ENCODE measurements at regions of chr5 and their contacts with region 1.

Region 1: DNA sequence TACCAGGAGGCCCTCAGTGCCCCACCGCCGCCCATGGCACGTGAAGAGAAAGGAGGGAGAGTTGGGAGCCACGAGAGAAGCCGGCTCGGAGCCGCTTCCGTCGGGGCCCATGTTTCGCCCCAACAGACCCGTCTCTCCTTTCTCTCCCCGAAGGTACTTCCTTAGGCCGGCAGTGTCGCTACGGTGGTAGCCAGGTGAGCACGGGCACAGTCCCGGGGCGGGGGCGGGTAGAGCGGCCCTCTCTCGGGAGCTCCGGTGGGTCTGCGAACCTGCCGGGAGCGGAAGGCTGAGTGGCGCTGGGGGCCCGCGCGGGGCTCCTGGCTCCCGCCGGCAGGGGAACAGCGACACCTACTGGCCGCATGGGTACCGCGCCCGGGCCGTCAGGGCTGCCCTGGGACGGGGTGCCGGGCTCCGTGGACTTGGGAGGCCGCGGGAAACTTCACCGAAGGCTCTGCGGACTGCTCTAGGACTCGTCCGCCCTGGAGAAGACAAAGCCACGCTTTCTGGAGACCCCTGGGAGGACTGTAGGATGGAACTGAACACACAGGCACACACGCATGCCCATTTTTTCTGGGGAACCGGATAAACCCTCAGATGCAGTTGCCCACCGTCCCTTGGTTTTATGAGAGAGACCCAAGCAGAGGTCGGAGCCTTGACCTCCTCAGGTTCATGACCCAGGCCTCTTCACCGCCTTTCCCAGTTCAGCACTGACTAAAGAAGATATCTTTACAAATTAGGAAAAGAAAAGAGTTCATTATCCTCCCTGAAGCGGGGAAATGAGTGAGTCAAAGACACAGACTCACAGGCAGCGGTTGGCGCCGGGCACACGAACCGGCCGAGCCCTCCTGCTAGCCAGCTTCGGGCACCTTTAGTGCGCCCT is 202.5 kb downstream of the MEF2C start:
- DNase-seq: peak; percentile 51
- H3K4me3 Mint-ChIP-seq: peak overlapping the region; percentile 45
- H3K27ac Mint-ChIP-seq: no peak overlapping the region
- H3K4me1 Mint-ChIP-seq: no peaks in the 10 kb centered on the region
- H3K27me3 Mint-ChIP-seq: peaks cover 77% of the 10 kb centered on the region
- CTCF ChIP-seq: peak; percentile 95

Region 2: GRCh38 chr5:88140856-88141752 is 539.4 kb before region 1 on chr5:
- CTCF ChIA-PET with region 1: interaction called, 3 read pairs
- POLR2A ChIA-PET with region 1: no interaction called
- intact Hi-C with region 1: loop called (anchors 5 kb)
- DNase-seq: peak; percentile 86
- H3K4me3 Mint-ChIP-seq: no peak overlapping the region
- H3K27ac Mint-ChIP-seq: no peak overlapping the region
- H3K4me1 Mint-ChIP-seq: no peaks in the 10 kb centered on the region
- H3K27me3 Mint-ChIP-seq: peaks cover 15% of the 10 kb centered on the region
- CTCF ChIP-seq: peak; percentile 47

Region 3: DNA sequence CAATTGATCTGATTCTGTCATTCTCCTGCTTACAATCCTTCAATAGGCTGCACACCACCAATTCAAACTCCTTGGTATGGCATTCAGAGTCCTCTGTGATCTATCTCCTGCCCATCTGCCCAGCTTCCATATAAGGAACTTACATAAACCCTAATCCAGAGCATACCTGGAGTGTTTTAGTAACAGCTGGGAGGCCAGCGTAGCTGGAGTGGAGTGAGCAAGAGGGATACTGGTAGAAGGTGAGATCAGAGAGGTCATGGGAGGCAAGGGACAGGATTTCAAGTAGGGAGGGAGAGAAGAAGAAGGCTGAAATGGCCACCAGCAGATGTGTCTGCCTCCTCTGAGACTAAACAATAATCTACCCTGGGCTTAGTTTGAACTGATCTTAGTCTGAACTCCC is 86.1 kb before region 1 on chr5:
- CTCF ChIA-PET with region 1: no interaction called
- POLR2A ChIA-PET with region 1: no interaction called
- intact Hi-C with region 1: no loop called
- DNase-seq: no peak
- H3K4me3 Mint-ChIP-seq: no peak overlapping the region
- H3K27ac Mint-ChIP-seq: no peak overlapping the region
- H3K4me1 Mint-ChIP-seq: no peaks in the 10 kb centered on the region
- H3K27me3 Mint-ChIP-seq: peaks cover 24% of the 10 kb centered on the region
- CTCF ChIP-seq: no peak

Region 4: GRCh38 chr5:88666761-88667495 is 13.6 kb before region 1 on chr5:
- CTCF ChIA-PET with region 1: interaction called, 13 read pairs
- POLR2A ChIA-PET with region 1: interaction called, 3 read pairs
- intact Hi-C with region 1: no loop called
- DNase-seq: no peak
- H3K4me3 Mint-ChIP-seq: peak overlapping the region; percentile 65
- H3K27ac Mint-ChIP-seq: no peak overlapping the region
- H3K4me1 Mint-ChIP-seq: no peaks in the 10 kb centered on the region
- H3K27me3 Mint-ChIP-seq: peaks cover 96% of the 10 kb centered on the region
- CTCF ChIP-seq: no peak

Region 5: GRCh38 chr5:90170261-90170660 is 1489.8 kb after region 1 on chr5:
- CTCF ChIA-PET with region 1: no interaction called
- POLR2A ChIA-PET with region 1: no interaction called
- intact Hi-C with region 1: no loop called
- DNase-seq: no peak
- H3K4me3 Mint-ChIP-seq: no peak overlapping the region
- H3K27ac Mint-ChIP-seq: no peak overlapping the region
- H3K4me1 Mint-ChIP-seq: no peaks in the 10 kb centered on the region
- H3K27me3 Mint-ChIP-seq: peaks cover 11% of the 10 kb centered on the region
- CTCF ChIP-seq: no peak